B cell (primary cell): ENCODE measurements at regions of chr2 and their contacts with region 1.

Region 1: DNA sequence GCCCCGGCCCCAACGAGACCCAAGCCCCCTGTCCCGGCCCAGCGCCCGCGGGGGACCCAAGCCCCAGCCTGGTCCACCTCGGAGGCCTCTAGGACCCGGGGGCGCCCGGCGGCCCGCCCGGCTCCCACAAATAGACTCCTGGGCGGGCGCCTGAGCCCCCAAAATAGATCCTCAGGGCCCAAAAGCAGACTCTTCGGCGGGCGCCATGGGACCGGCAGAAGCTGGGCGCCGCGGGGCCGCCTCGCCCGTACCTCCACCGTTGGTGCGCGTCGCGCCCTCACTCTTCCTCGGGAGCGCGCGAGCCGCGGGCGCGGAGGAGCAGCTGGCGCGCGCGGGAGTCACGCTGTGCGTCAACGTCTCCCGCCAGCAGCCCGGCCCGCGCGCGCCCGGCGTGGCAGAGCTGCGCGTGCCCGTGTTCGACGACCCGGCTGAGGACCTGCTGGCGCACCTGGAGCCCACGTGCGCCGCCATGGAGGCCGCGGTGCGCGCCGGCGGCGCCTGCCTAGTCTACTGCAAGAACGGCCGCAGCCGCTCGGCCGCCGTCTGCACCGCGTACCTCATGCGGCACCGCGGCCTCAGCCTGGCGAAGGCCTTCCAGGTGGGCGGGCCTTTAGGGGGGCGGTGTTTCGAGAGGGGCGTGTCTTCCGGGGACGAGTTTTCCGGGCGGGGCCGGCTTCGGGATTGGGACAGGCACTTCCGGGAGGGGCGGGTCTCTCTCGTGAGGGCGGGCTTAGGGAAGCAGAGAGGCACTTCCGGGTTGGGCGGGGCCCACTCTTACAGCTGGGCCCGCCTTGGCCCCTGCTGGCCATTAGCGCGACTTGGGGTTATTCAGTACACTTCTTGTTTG is 546 bp downstream of the DUSP28 start:
- DNase-seq: peak; percentile 99
- ATAC-seq: peak; percentile 67
- H3K4me3 ChIP-seq: peak overlapping the region; percentile 65 to 86 (median 74)
- H3K4me3 Mint-ChIP-seq: peak overlapping the region; percentile 81
- H3K27ac ChIP-seq: peak overlapping the region; percentile 89 to 98
- H3K27ac Mint-ChIP-seq: peak overlapping the region; percentile 96
- H3K4me1 ChIP-seq: peaks cover 52 to 66% of the 10 kb centered on the region in 2 donors
- H3K4me1 Mint-ChIP-seq: peaks cover 71% of the 10 kb centered on the region
- H3K27me3 ChIP-seq: no peaks in the 10 kb centered on the region
- H3K27me3 Mint-ChIP-seq: no peaks in the 10 kb centered on the region
- CTCF ChIP-seq: no peak

Region 2: GRCh38 chr2:240513549-240514287 is 47.0 kb before region 1 on chr2:
- CTCF ChIA-PET with region 1: interaction called, 25 read pairs
- POLR2A ChIA-PET with region 1: interaction called, 7 read pairs
- intact Hi-C with region 1: loop called (anchors 1 kb)
- DNase-seq: peak; percentile 85
- ATAC-seq: peak; percentile 99
- H3K4me3 ChIP-seq: no peak overlapping the region
- H3K4me3 Mint-ChIP-seq: peak overlapping the region; percentile 56
- H3K27ac ChIP-seq: peak overlapping the region; percentile 55 to 59
- H3K27ac Mint-ChIP-seq: peak overlapping the region; percentile 78
- H3K4me1 ChIP-seq: peaks cover 12 to 14% of the 10 kb centered on the region in 2 donors
- H3K4me1 Mint-ChIP-seq: peaks cover 10% of the 10 kb centered on the region
- H3K27me3 ChIP-seq: no peaks in the 10 kb centered on the region
- H3K27me3 Mint-ChIP-seq: no peaks in the 10 kb centered on the region
- CTCF ChIP-seq: peak; percentile 86

Region 3: DNA sequence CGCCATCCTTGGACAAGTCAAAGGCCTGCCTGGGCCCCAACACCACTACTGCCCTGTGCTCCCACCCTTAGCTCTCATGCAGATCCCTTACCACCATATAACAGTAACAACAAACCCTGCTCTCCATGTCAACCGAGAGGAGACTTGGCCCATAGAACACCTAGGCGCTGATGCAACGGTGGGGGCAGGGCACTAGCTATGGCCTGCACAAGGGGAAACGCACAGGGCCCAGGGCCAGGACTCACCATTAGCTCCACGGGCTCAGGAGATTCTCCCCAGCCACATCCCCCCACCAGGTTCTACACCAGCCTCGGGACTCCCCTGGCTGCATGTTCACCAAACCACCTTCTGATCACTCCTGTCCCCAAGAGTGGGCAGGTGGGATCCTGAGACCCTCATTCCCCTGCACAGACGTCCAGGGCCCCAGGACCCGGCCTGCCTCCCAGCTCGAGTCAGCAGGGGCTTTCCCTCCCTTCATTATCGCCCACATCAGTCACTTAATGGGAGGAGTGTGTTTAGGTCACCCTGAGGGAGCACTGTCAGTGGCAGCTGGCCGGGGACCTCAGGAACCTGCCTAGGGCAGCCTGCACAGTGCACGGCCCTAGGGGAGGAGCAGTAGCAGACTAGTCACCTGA is 32.2 kb before region 1 on chr2:
- CTCF ChIA-PET with region 1: no interaction called
- POLR2A ChIA-PET with region 1: no interaction called
- intact Hi-C with region 1: no loop called
- DNase-seq: no peak
- ATAC-seq: no peak
- H3K4me3 ChIP-seq: no peak overlapping the region
- H3K4me3 Mint-ChIP-seq: no peak overlapping the region
- H3K27ac ChIP-seq: no peak overlapping the region
- H3K27ac Mint-ChIP-seq: no peak overlapping the region
- H3K4me1 ChIP-seq: no peaks in the 10 kb centered on the region
- H3K4me1 Mint-ChIP-seq: no peaks in the 10 kb centered on the region
- H3K27me3 ChIP-seq: no peaks in the 10 kb centered on the region
- H3K27me3 Mint-ChIP-seq: no peaks in the 10 kb centered on the region
- CTCF ChIP-seq: no peak

Region 4: GRCh38 chr2:241036397-241036963 is 475.8 kb after region 1 on chr2:
- CTCF ChIA-PET with region 1: no interaction called
- POLR2A ChIA-PET with region 1: no interaction called
- intact Hi-C with region 1: loop called (anchors 2 kb)
- DNase-seq: peak; percentile 87
- ATAC-seq: peak; percentile 69
- H3K4me3 ChIP-seq: peak overlapping the region in 4 of 5 experiments; percentile 39 to 79 (median 65)
- H3K4me3 Mint-ChIP-seq: peak overlapping the region; percentile 92
- H3K27ac ChIP-seq: peak overlapping the region; percentile 68 to 79
- H3K27ac Mint-ChIP-seq: peak overlapping the region; percentile 94
- H3K4me1 ChIP-seq: peaks cover 38 to 59% of the 10 kb centered on the region in 2 donors
- H3K4me1 Mint-ChIP-seq: peaks cover 57% of the 10 kb centered on the region
- H3K27me3 ChIP-seq: no peaks in the 10 kb centered on the region
- H3K27me3 Mint-ChIP-seq: no peaks in the 10 kb centered on the region
- CTCF ChIP-seq: no peak

Region 5: DNA sequence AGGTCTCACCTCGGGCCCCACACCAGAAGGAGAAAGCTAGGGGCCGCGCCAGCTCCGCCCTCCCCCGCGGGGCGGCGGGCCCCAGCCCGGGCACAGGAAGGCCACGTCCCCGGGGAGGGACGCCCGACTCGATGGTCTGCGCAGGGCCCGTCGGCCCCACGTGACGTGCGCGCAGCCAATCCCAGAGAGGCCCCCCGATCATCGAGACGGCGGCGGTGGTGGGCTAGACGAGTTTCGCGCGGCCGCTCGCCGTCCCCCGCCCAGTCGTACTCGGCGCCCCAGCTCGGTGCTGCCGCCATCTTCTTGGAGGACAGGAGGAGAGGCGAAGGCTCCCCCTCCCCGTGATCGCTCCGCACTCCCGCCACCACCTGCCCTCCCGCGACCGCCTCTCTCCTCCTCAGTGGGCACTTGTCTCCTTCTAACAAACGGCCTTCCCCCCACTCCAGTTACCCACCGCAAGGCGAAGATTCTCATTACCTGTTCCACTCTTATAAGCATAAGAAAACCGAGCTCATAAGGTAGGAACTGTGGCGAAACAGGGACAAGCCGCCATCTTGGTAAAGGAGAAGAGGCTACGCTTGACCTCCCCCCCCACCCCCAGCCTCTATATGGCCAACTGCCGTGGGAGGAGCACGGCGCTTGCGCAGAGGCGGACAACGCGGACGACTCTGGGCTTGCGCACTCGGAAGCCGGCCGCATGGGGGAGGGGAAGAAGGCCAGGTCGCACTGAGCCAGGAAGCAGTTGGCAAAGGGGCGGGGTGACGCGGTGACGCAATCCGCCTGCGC is 754.6 kb after region 1 on chr2 and contains the start of gene HDLBP:
- CTCF ChIA-PET with region 1: no interaction called
- POLR2A ChIA-PET with region 1: interaction called, 3 read pairs
- intact Hi-C with region 1: loop called (anchors 2 kb)
- DNase-seq: peak; percentile 100
- ATAC-seq: peak; percentile 69
- H3K4me3 ChIP-seq: peak within 1 kb of the TSS; percentile 90 to 99 (median 91)
- H3K4me3 Mint-ChIP-seq: peak within 1 kb of the TSS; percentile 95
- H3K27ac ChIP-seq: peak within 1 kb of the TSS; percentile 98 to 99
- H3K27ac Mint-ChIP-seq: peak within 1 kb of the TSS; percentile 99
- H3K4me1 ChIP-seq: peaks cover 43 to 47% of the 10 kb centered on the region in 2 donors
- H3K4me1 Mint-ChIP-seq: peaks cover 72% of the 10 kb centered on the region
- H3K27me3 ChIP-seq: no peaks in the 10 kb centered on the region
- H3K27me3 Mint-ChIP-seq: no peaks in the 10 kb centered on the region
- CTCF ChIP-seq: peak; percentile 39
- total RNA-seq, gene HDLBP: 127 and 153 TPM in 2 replicates

Region 6: DNA sequence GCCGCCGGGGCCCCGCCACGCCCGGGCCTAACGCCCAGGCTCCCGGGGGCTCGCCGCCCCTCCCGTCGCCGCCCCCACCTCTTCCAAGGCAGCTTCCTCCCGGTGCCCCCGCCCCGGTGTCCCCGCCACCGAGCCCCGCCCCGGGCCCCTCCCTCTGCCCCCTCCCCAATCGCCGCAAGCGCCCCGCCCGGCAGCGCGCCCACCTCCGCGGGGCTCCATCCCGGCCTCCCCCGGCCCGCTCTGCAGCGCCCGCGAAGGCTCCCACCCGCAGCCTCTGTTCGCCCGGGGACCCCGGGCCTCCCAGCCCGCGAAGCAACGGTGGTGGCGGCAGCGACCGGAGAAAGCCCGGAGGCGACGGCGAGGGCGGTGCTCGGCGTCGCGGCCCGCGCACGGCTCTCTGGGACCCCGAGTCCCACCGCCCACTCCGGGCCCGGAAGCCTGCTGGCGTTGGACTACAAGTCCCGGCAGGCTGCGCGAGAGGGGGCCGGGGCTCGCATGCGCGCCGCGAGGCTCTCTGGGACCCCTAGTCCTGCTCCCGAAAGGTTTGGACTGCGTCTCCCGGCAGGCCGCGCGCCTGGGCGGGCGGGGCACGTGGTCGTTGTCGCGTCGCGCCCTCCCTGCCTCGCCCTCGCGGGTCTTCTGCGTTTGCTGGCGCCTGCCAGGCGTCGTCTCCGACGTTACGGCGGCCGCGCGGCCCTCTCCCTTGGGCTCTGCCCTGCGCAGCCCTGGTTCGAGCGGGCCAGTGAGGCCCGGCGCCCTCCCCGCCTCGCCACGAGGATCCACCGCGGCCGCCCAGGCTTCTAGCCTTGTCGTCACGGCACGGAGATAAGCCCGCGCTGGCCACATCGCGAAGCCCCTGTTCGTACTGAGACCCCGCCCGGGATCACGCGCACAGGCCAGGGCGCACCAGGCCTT is 947.8 kb after region 1 on chr2 and contains the start of gene STK25:
- CTCF ChIA-PET with region 1: no interaction called
- POLR2A ChIA-PET with region 1: no interaction called
- intact Hi-C with region 1: loop called (anchors 2 kb)
- DNase-seq: peak; percentile 97
- ATAC-seq: peak; percentile 93
- H3K4me3 ChIP-seq: peak within 1 kb of the TSS; percentile 34 to 78 (median 70)
- H3K4me3 Mint-ChIP-seq: peak within 1 kb of the TSS; percentile 85
- H3K27ac ChIP-seq: peak within 1 kb of the TSS; percentile 56 to 85
- H3K27ac Mint-ChIP-seq: peak within 1 kb of the TSS; percentile 89
- H3K4me1 ChIP-seq: peaks cover 15 to 20% of the 10 kb centered on the region in 2 donors
- H3K4me1 Mint-ChIP-seq: peaks cover 24% of the 10 kb centered on the region
- H3K27me3 ChIP-seq: no peaks in the 10 kb centered on the region
- H3K27me3 Mint-ChIP-seq: no peaks in the 10 kb centered on the region
- CTCF ChIP-seq: no peak
- total RNA-seq, gene STK25: 183 TPM in 2 replicates

Region 7: DNA sequence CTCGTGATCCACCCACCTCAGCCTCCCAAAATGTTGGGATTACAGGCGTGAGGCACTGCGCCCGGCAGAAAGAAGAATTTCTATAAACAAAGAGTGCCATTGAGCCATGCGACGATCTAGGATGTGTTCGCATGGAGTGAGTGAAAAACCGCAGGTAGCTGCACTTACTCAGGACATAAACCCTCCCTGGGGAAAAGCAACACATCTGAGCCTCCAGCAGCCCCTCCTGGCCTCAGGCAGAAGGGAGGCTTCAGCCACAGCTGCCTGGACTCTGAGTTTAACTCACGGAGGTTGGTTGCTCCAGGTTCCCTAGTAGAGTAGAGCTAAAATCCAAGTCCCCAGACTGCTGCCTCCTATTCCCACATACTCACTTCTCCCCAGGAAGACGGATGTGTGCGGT is 959.0 kb after region 1 on chr2:
- CTCF ChIA-PET with region 1: no interaction called
- POLR2A ChIA-PET with region 1: no interaction called
- intact Hi-C with region 1: no loop called
- DNase-seq: no peak
- ATAC-seq: no peak
- H3K4me3 ChIP-seq: no peak overlapping the region
- H3K4me3 Mint-ChIP-seq: no peak overlapping the region
- H3K27ac ChIP-seq: no peak overlapping the region
- H3K27ac Mint-ChIP-seq: no peak overlapping the region
- H3K4me1 ChIP-seq: no peaks in the 10 kb centered on the region
- H3K4me1 Mint-ChIP-seq: peaks cover 3% of the 10 kb centered on the region
- H3K27me3 ChIP-seq: peaks cover 0 to 19% (median 6%) of the 10 kb centered on the region in 4 experiments
- H3K27me3 Mint-ChIP-seq: peaks cover 8% of the 10 kb centered on the region
- CTCF ChIP-seq: no peak

Region 8: GRCh38 chr2:241877989-241878970 is 1317.6 kb after region 1 on chr2:
- CTCF ChIA-PET with region 1: no interaction called
- POLR2A ChIA-PET with region 1: interaction called, 4 read pairs
- intact Hi-C with region 1: loop called (anchors 5 kb)
- DNase-seq: peak; percentile 79
- ATAC-seq: no peak
- H3K4me3 ChIP-seq: no peak overlapping the region
- H3K4me3 Mint-ChIP-seq: no peak overlapping the region
- H3K27ac ChIP-seq: no peak overlapping the region
- H3K27ac Mint-ChIP-seq: peak overlapping the region; percentile 53
- H3K4me1 ChIP-seq: peaks cover 19 to 30% of the 10 kb centered on the region in 2 donors
- H3K4me1 Mint-ChIP-seq: peaks cover 32% of the 10 kb centered on the region
- H3K27me3 ChIP-seq: no peaks in the 10 kb centered on the region
- H3K27me3 Mint-ChIP-seq: no peaks in the 10 kb centered on the region
- CTCF ChIP-seq: peak; percentile 64